Activated naive CD8-positive, alpha-beta T cell treated with anti-CD3 and anti-CD28 coated beads, Interleukin-2, amount 10 ng/mL, durations not matched to agents 7 days and 5 days (primary cell): ENCODE measurements at regions of chr5 and their contacts with region 1.

Region 1: DNA sequence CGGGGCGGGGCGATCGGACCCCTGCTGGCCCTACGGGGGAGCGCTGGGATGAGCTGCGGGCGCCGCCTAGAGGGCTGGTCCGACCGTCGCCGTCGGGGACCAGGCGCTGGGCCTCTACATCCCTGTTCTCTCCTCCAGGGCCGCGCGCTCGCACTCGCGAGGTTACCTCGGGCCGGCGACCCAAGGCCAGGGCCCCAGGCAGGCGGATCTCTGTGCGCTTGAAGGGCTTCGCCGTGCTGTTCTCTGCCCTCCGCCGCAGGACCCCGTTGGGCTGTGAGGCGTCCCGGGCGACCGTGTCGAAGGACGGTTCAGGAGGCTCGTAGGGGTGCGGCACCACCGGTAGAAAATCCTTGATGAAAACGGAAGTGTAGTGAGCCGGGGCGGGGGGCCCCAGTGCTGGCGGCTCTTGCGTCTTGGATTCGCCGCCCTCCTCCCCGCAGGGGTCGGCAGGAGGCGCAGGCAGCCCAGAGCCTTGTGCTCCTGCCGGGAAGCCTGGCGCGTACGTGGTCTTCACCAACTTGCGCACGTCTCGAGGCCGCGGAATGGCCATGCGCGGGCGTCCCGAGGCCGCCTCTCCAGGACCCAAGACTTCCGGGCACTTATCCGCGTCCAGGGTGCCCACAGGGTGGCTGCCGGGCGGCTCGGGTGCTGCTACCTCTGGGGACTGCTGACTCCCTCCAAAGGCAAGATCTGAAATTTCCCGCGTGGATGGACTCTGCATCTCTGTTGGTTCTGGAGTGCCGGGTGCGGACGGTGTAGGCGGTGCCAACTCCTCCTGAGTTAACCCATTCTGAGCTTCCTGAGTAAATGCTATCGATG is 2.0 kb downstream of the PROB1 start:
- DNase-seq: peak; percentile 94
- ATAC-seq: peak; percentile 67
- H3K4me3 Mint-ChIP-seq: peak overlapping the region; percentile 96
- H3K27ac Mint-ChIP-seq: peak overlapping the region; percentile 95
- H3K4me1 Mint-ChIP-seq: peaks cover 52% of the 10 kb centered on the region
- H3K27me3 Mint-ChIP-seq: no peaks in the 10 kb centered on the region

Region 2: DNA sequence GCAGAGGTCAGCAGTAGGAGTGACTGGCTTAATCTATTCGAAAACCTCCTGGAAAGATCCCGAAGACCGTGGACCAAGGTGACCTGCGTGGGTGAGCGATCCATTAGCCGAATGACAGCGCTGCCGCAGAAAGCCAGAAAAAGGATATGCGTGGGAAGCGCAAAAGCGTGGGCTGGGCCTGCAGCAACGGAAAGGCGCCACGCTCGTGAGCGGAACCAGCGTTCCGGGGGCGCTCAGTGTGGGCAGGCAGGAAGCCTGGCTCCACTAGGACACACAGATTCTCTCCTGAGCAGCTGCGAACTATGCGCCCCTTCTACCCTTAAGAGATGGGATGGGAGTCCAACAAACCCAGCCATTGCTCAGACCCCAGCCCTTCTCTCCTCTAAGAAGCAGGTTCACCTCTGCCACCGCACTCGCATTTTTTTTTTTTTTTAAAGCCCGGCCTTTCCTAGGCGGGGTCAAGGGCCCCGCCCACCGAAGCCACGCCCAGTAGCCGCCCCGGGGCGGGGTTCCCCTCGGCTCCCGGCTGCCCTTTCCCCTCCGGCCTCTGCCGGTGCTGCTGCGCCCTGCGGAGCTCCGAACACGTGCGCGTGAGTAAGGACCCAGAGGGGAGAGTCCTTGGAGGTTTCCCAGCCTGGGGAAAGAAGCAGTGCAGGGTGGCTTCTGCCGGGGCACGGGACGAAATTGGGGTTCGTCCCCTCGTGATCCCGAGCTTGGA is 119.2 kb before region 1 on chr5:
- POLR2A ChIA-PET with region 1: interaction called, 12 read pairs
- DNase-seq: peak; percentile 94
- ATAC-seq: peak; percentile 90
- H3K4me3 Mint-ChIP-seq: peak overlapping the region; percentile 89
- H3K27ac Mint-ChIP-seq: peak overlapping the region; percentile 72
- H3K4me1 Mint-ChIP-seq: peaks cover 51% of the 10 kb centered on the region
- H3K27me3 Mint-ChIP-seq: no peaks in the 10 kb centered on the region

Region 3: DNA sequence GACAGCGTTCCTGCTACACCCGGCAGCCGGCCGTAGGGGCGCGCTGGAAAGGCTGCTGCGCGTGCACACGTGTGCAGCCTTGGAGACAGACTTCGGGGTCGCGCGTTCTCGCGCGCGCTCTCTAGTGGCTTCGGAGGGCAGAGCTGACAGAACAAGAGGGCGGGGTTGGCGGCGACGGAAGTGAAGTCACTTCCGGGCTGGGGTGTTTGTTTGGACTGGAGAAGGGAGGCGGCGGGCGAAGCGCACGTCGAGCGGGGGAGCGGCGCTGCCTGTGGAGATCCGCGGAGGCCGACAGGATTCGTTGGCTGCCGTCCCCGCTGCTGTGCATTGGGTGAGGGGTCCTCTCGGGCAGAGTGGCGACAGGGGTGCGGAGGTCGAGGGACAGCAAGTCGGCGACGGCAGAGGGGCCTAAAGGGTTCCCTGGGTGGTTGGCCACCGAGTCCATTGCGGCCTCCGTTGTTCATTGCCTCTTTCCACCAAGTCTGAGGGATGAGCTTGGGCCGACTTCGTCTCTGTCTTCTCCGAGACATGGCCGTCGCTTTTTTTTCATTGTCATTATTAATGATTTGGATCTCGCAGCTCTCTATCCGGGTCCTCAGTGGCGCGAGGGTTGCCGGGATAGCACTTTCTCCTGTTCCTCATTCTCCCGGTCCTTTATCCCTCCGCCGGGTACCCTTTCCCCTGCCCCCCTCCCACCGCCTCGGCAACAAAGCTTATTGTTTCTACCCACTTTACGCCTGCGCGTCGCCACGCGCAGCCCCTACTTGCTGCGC is 51.1 kb before region 1 on chr5 and contains the start of gene PAIP2:
- POLR2A ChIA-PET with region 1: interaction called, 105 read pairs
- DNase-seq: peak; percentile 97
- ATAC-seq: peak; percentile 88
- H3K4me3 Mint-ChIP-seq: peak within 1 kb of the TSS; percentile 100
- H3K27ac Mint-ChIP-seq: peak within 1 kb of the TSS; percentile 100
- H3K4me1 Mint-ChIP-seq: peaks cover 29% of the 10 kb centered on the region
- H3K27me3 Mint-ChIP-seq: no peaks in the 10 kb centered on the region
- total RNA-seq, gene PAIP2: 108 to 118 TPM

Region 4: DNA sequence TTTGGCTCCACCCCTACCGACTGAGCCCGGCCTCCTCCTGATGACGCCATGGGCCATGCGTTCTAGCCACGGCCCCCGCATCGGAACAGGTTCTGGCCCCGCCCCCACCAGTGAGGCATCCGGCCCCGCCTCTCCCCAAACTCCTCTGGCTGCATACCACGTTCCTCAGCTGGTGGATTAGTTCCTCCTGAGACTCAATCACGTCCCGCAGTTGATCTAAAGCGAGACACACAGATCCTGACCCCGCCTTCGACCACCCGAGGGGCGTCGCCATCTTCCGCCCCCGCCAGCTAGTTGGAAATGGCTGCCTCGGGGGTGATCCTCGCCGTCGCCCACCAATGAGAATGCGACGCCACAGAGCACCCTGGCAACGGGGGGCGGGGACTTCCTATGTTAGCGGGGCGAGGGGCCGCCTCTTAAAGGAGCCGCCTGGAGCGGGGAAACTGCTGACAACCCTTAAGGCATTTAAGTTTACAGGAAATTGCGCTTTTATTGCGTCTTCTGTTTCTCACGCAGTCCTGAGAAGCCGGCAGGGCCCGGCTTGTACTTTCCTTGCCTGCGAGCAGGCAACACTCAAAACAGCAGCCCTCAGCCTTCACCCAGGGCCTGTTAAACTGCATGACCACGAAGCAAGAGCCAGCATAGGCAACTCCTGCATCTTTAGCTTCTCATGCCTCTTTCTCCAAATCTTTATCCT is 11.0 kb after region 1 on chr5 and contains the start of gene SPATA24:
- POLR2A ChIA-PET with region 1: interaction called, 28 read pairs
- DNase-seq: peak; percentile 96
- ATAC-seq: peak; percentile 94
- H3K4me3 Mint-ChIP-seq: peak within 1 kb of the TSS; percentile 96
- H3K27ac Mint-ChIP-seq: peak within 1 kb of the TSS; percentile 100
- H3K4me1 Mint-ChIP-seq: peaks cover 35% of the 10 kb centered on the region
- H3K27me3 Mint-ChIP-seq: no peaks in the 10 kb centered on the region
- total RNA-seq, gene SPATA24: 6.3 to 6.4 TPM

Region 5: DNA sequence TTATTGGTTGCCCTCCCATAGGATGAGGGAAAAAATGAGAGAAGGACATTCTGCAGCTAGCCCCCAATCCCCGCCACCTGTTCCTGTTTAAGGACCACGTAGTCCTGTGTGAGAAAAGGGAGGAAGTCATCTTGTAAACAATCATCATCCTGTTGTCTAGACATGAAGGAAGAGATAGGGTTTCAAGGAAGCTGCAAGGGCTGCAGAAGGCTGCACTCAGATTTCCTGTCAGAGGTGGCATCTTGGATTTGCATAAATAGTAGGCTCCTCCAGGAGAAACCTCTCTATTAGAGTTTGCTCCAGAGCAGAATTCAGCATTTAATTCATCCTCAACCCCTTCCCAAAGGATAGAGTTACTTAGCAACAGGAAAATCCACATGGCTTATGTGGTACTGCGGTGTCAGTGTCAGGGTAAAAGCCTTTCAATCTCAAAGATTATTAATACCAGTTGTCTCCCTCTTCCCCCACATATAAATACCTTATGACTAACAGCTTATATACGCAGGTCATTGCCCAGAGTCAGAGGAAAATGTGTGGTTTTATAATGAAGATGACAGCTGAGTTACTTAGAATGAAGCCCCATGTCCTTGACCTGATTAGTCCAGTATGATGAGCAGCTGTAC is 51.1 kb after region 1 on chr5:
- POLR2A ChIA-PET with region 1: no interaction called
- DNase-seq: no peak
- ATAC-seq: no peak
- H3K4me3 Mint-ChIP-seq: peak overlapping the region; percentile 37
- H3K27ac Mint-ChIP-seq: no peak overlapping the region
- H3K4me1 Mint-ChIP-seq: peaks cover 32% of the 10 kb centered on the region
- H3K27me3 Mint-ChIP-seq: peaks cover 22% of the 10 kb centered on the region